A549 (cell line): ENCODE measurements at regions of chr16 and their contacts with region 1.

Region 1: GRCh38 chr16:69754469-69755310 is at the start of gene NOB1:
- DNase-seq: peak; percentile 88 to 98
- ATAC-seq: peak; percentile 98
- H3K4me3 ChIP-seq: peak within 1 kb of the TSS; percentile 85
- H3K27ac ChIP-seq: peak within 1 kb of the TSS; percentile 82 to 94
- H3K4me1 ChIP-seq: peaks cover 18% of the 10 kb centered on the region; the same call in 2 of the 3 replicates
- CTCF ChIP-seq: peak; percentile 95
- EP300 ChIP-seq: no peak
- POLR2A ChIP-seq: peak; percentile 97
- RAD21 ChIP-seq: peak; percentile 87 to 95
- polyA plus RNA-seq, gene NOB1: 120 and 134 TPM in 2 replicates

Region 2: GRCh38 chr16:69703638-69704037 is 51.1 kb before region 1 on chr16:
- CTCF ChIA-PET with region 1: interaction called, 54 read pairs
- POLR2A ChIA-PET with region 1: interaction called, 6 read pairs
- DNase-seq: no peak
- ATAC-seq: peak; percentile 9 to 11; a peak in 4 of 6 replicates
- H3K4me3 ChIP-seq: no peak overlapping the region
- H3K27ac ChIP-seq: no peak overlapping the region
- H3K4me1 ChIP-seq: peaks cover 41% of the 10 kb centered on the region
- CTCF ChIP-seq: no peak
- EP300 ChIP-seq: no peak
- POLR2A ChIP-seq: no peak
- RAD21 ChIP-seq: no peak

Region 3: GRCh38 chr16:69709456-69710084 is 45.1 kb before region 1 on chr16:
- CTCF ChIA-PET with region 1: interaction called, 160 read pairs
- POLR2A ChIA-PET with region 1: interaction called, 6 read pairs
- DNase-seq: peak; percentile 58 to 73
- ATAC-seq: peak in 1 of 2 experiments; percentile 5; a peak in 1 of 6 replicates
- H3K4me3 ChIP-seq: no peak overlapping the region
- H3K27ac ChIP-seq: peak overlapping the region in 1 of 2 experiments; percentile 44; a peak in 3 of 6 replicates
- H3K4me1 ChIP-seq: peaks cover 59% of the 10 kb centered on the region
- CTCF ChIP-seq: peak; percentile 78
- EP300 ChIP-seq: no peak
- POLR2A ChIP-seq: no peak
- RAD21 ChIP-seq: peak; percentile 68 to 72

Region 4: DNA sequence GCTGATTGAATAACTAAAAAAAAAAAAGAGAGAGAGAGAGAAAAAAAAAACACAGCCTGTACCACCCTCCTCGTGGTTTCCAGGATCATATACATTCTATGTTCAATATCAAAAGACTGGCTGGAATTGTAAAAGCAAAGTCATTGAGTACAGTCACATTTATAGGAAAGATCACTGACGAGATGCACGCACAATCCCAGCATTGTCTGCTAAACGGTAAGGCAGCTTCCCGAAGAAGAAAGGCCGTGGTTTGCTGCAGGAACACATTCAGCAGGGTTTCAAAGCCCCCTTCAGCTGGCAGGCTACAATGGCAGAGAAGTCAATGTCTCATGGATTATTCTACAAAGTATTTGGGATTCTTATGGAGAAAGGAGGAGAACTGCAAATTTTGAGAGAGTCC is 37.6 kb before region 1 on chr16:
- CTCF ChIA-PET with region 1: interaction called, 160 read pairs
- POLR2A ChIA-PET with region 1: interaction called, 11 read pairs
- DNase-seq: no peak
- ATAC-seq: no peak
- H3K4me3 ChIP-seq: no peak overlapping the region
- H3K27ac ChIP-seq: no peak overlapping the region
- H3K4me1 ChIP-seq: peaks cover 53% of the 10 kb centered on the region
- CTCF ChIP-seq: no peak
- EP300 ChIP-seq: no peak
- POLR2A ChIP-seq: no peak
- RAD21 ChIP-seq: no peak

Region 5: GRCh38 chr16:69726296-69727060 is 28.2 kb before region 1 on chr16 and contains the start of gene NQO1:
- CTCF ChIA-PET with region 1: interaction called, 160 read pairs
- POLR2A ChIA-PET with region 1: interaction called, 59 read pairs
- DNase-seq: peak; percentile 95 to 100
- ATAC-seq: peak; percentile 91 to 93
- H3K4me3 ChIP-seq: peak within 1 kb of the TSS; percentile 77
- H3K27ac ChIP-seq: peak within 1 kb of the TSS; percentile 95 to 99
- H3K4me1 ChIP-seq: peaks cover 31% of the 10 kb centered on the region
- CTCF ChIP-seq: no peak
- EP300 ChIP-seq: peak; percentile 62 to 86; a peak in 3 of 5 replicates
- POLR2A ChIP-seq: peak; percentile 99
- RAD21 ChIP-seq: peak in 1 of 2 experiments; percentile 12; a peak in 1 of 5 replicates
- polyA plus RNA-seq, gene NQO1: 1,834 and 2,226 TPM in 2 replicates

Region 6: DNA sequence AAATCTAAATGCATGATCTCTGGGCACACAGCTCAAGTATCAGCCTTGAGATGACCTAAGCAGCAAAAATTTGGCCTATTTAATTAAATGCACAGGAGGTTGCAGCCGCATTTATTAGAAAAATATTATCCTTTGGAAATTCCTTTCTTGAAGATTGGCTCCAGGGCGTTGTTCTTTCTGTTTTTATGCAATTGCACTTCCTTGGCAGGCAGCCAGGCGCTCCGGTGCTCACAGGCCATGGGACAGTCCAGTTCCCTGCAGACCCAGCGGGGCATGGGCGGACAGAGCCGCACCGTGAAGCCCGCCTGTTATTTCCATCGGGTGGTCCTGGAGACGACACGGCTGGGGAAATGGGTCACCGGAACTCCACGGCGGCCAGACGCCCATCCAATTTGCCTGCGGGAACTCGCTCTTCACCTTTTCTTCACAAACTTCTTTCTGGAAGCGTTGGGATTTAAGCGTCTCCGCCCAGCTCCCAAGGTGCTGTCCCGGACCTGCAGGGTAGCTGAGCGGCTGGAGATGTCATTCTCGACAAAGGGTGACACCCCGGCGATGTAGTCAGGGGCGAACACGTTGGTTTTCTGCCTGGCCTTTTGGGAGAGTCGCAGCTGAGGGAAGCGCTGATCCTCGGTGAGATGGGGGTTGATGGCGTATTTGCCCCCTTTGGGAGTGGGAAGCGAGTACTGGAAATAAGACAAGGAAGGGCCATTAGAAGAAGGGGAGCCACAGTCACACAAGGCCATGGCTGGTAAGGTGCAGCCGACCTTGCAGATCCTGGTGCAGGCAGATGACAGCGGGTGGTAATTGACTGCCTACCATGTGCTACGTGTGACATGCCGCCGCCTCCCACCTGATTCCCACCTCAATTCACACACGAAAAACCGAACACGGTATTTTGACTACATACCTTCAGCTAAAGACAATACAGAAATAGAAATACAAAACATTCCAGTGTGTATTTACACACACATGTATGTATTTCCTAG is 12.5 kb before region 1 on chr16:
- CTCF ChIA-PET with region 1: interaction called, 68 read pairs
- POLR2A ChIA-PET with region 1: interaction called, 11 read pairs
- DNase-seq: peak in 1 of 2 experiments; percentile 59
- ATAC-seq: peak in 1 of 2 experiments; percentile 42; a peak in 3 of 6 replicates
- H3K4me3 ChIP-seq: peak overlapping the region; percentile 14; the same call in 1 of the 3 replicates
- H3K27ac ChIP-seq: peak overlapping the region; percentile 67 to 70
- H3K4me1 ChIP-seq: peaks cover 29% of the 10 kb centered on the region
- CTCF ChIP-seq: no peak
- EP300 ChIP-seq: no peak
- POLR2A ChIP-seq: no peak
- RAD21 ChIP-seq: no peak

Region 7: GRCh38 chr16:69773260-69773947 is 18.7 kb after region 1 on chr16:
- CTCF ChIA-PET with region 1: interaction called, 11 read pairs
- POLR2A ChIA-PET with region 1: no interaction called
- DNase-seq: no peak
- ATAC-seq: no peak
- H3K4me3 ChIP-seq: no peak overlapping the region
- H3K27ac ChIP-seq: no peak overlapping the region
- H3K4me1 ChIP-seq: 0 out of 3 replicates have a peak, but pooled peaks cover 3% of the 10 kb centered on the region
- CTCF ChIP-seq: no peak
- EP300 ChIP-seq: no peak
- POLR2A ChIP-seq: no peak
- RAD21 ChIP-seq: no peak

Region 8: GRCh38 chr16:69890114-69890891 is 135.6 kb after region 1 on chr16:
- CTCF ChIA-PET with region 1: no interaction called
- POLR2A ChIA-PET with region 1: no interaction called
- DNase-seq: no peak
- ATAC-seq: no peak
- H3K4me3 ChIP-seq: no peak overlapping the region
- H3K27ac ChIP-seq: no peak overlapping the region
- H3K4me1 ChIP-seq: no peaks in the 10 kb centered on the region
- CTCF ChIP-seq: no peak
- EP300 ChIP-seq: no peak
- POLR2A ChIP-seq: no peak
- RAD21 ChIP-seq: no peak